Heart right ventricle (tissue), 16 donors: ENCODE measurements at regions of chrX and their contacts with region 1.

Region 1: DNA sequence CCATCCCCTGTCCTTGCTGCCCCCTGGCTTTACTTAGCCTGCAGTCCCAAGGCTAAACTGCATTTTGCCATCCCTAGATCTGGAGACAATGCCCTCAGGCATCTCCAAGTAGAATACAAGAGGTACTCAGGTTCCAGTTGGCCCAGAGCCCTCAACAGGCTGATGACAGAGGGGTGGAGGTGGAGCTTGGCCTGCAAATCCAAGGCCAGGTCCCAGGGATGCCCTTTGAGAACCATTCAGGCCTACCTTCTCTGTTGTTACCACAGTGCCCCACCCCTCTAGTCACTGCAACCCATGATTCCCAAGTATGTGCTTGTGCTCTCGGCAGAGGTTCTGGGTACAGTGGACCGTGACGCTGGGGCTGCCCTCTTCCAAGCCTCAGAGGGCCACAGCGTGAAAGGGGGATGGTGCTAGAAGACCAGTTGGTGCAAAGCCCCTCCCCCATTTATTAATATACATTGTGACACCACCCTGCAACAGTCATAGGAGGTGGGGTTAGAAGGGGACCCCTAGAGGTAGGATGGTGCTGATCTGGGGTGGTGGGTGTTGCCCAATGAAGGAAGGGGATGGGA is 6.4 kb upstream of the UBA1 start:
- DNase-seq: no peak
- ATAC-seq: no peak
- H3K4me3 ChIP-seq: no peak overlapping the region
- H3K27ac ChIP-seq: no peak overlapping the region
- H3K4me1 ChIP-seq: peaks cover 0 to 17% (median 0%) of the 10 kb centered on the region in 9 donors
- H3K27me3 ChIP-seq: peaks cover 0 to 69% (median 0%) of the 10 kb centered on the region in 7 donors
- CTCF ChIP-seq: no peak

Region 2: DNA sequence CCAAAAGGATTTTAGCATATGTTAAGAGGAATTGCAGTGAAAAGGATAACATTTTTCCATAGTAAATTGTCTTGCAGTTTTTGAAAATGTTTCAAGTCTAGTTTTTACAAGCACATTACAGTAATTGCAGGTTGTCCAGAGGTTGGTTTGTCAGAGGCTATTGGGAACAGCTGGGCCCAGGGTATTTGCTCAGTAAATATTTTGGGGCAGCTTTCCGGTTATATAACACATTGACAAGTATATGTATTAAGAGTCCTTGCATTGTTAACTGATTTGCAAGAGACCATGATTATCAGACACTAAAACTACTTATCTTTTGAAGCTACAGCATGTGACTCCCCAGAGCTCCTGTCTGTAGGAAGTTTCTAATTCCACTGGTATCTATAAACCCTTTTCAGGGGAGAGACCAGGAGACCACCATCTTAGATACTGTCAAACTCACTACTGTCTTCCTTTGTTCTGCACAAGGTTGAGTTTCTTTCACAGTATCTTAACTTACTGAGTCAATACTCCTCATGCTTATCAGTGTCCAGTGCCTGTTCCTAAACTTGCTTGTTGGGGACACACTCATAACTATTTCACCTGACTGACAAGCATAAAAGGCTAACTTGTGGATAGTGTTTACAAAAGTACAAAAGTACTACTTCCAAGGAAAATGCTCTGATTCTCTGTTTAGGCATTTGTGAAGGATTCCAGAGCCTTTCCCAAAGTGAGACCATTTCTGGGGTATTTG is 127.9 kb before region 1 on chrX:
- intact Hi-C with region 1: no loop called
- DNase-seq: no peak
- ATAC-seq: no peak
- H3K4me3 ChIP-seq: no peak overlapping the region
- H3K27ac ChIP-seq: no peak overlapping the region
- H3K4me1 ChIP-seq: no peaks in the 10 kb centered on the region
- H3K27me3 ChIP-seq: peaks cover 0 to 79% (median 0%) of the 10 kb centered on the region in 7 donors
- CTCF ChIP-seq: no peak

Region 3: DNA sequence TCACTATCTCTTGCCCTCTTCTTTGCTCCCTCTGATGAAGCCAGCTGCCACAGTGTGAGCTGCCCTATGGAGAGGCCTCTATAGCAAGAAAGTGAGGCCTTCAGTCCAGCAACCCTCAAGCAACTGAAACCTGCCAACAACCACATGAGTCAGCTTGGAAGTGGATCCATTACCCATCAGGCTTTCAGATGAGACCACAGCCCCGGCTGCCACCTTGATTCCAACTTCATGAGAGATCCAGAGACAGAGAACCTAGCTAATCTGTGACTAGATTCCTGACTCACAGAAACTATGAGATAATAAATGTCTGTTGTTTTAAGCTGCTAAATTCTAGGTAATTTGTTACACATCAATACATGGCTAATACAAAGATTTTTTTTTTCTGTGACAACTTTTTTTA is 1476.0 kb after region 1 on chrX:
- intact Hi-C with region 1: loop called in 1 of 10 experiments (anchors 5 kb)
- DNase-seq: no peak
- ATAC-seq: no peak
- H3K4me3 ChIP-seq: no peak overlapping the region
- H3K27ac ChIP-seq: no peak overlapping the region
- H3K4me1 ChIP-seq: no peaks in the 10 kb centered on the region
- H3K27me3 ChIP-seq: peaks cover 0 to 10% (median 0%) of the 10 kb centered on the region in 7 donors
- CTCF ChIP-seq: no peak